Activated CD4-positive, alpha-beta T cell treated with anti-CD3 and anti-CD28 coated beads for 36 hours (primary cell): ENCODE measurements at regions of chr5 and their contacts with region 1.

Region 1: GRCh38 chr5:55969956-55970355 is 24.8 kb downstream of the IL6ST start:
- DNase-seq: no peak
- ATAC-seq: no peak
- H3K4me3 Mint-ChIP-seq: no peak overlapping the region
- H3K27ac Mint-ChIP-seq: peak overlapping the region; percentile 88
- H3K4me1 Mint-ChIP-seq: peaks cover 67% of the 10 kb centered on the region
- H3K27me3 Mint-ChIP-seq: no peaks in the 10 kb centered on the region

Region 2: DNA sequence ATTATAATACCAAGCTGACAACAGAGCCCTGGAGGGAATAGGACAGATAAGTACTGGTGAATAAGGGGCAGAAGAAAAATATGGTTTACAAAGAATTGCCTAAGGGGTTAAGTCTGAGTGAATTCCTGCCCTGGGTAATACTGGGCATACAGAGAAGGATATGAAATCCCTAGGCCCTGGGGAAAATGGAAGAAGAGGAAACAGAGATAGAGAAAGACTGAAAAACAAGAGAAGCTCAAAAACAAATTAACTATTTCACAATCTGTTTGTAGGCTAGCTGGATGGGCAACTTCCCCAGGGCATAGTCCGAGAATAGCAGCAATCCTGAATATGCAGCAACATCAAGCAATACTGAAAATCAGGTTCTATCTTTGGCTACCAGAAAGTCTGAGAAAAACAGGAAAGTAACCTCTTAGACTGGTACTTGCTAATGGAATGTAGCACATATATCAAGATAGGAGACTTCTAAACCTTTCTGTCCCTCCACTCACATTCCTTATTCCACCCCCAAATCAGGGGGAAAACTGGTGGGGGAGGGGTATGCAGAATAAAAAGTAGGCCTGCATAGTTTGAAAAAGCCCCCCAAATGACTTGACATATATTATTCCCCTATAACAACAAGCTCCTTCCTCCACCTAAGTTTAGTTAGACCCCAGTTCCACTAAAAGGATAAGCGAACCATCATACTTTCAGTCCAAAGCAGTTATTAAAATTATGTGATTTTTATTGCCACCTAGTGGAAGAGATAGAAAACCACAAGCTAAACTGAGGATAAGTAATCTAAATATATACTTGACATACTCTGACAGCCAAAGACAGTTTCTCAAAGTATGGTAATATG is 278.5 kb before region 1 on chr5:
- CTCF ChIA-PET with region 1: no interaction called
- POLR2A ChIA-PET with region 1: no interaction called
- intact Hi-C with region 1: no loop called
- DNase-seq: no peak
- ATAC-seq: peak; percentile 36
- H3K4me3 Mint-ChIP-seq: no peak overlapping the region
- H3K27ac Mint-ChIP-seq: no peak overlapping the region
- H3K4me1 Mint-ChIP-seq: no peaks in the 10 kb centered on the region
- H3K27me3 Mint-ChIP-seq: no peaks in the 10 kb centered on the region

Region 3: DNA sequence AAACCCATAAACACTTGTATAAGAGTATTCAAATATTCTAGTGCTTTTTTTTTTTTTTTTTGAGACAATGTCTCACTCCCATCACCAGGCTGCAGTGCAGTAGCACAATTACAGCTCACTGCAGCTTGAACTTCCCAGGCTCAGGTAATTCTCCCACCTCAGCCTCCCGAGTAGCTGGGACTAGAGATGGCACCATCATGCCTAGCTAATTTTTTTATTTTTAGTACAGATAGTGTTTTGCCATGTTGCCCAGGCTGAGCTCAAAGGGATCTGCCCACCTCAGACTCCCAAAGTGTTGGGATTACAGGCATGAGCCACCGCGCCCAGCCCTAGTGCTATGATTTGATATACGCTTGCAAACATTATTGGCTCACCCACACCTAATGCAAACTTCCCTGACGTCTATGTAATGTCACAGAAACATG is 13.0 kb after region 1 on chr5:
- CTCF ChIA-PET with region 1: interaction called, 5 read pairs
- POLR2A ChIA-PET with region 1: interaction called, 13 read pairs
- intact Hi-C with region 1: no loop called
- DNase-seq: peak; percentile 46
- ATAC-seq: peak; percentile 24
- H3K4me3 Mint-ChIP-seq: peak overlapping the region; percentile 37
- H3K27ac Mint-ChIP-seq: peak overlapping the region; percentile 67
- H3K4me1 Mint-ChIP-seq: peaks cover 77% of the 10 kb centered on the region
- H3K27me3 Mint-ChIP-seq: no peaks in the 10 kb centered on the region

Region 4: DNA sequence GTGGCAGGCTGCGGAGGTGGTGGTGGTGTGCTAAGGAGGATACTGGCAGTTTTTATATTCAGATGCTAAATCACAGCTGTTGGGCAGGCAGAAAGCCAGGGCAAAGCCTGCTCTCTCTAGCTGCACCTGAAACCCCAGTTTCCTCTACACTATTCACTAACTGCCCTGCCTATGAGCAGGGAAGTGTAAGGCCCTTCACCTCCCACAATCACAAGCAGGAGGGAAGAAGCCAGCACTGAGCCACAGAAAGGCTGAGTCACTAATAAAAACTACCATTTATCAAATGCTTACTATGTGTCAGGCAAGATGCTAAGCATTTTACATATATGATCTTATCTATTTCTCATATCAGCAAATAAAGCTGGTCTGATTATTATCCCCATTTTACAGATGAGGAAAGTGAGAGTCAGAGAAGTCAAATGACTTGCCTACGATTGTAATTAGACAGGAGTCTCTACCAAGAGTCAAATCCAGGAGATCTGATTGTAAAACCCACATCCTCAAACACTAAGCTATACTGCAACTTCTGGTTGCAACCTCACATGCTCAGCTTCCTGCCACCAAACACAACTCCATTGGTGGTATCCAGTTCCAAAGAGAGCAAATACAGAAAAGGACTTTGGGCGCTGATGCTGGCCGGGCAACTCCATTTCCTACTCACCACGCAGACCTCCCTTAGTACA is 42.5 kb after region 1 on chr5:
- CTCF ChIA-PET with region 1: no interaction called
- POLR2A ChIA-PET with region 1: no interaction called
- intact Hi-C with region 1: loop called in 1 of 2 experiments (anchors 1 kb)
- DNase-seq: peak; percentile 57
- ATAC-seq: peak; percentile 74
- H3K4me3 Mint-ChIP-seq: peak overlapping the region; percentile 3
- H3K27ac Mint-ChIP-seq: peak overlapping the region; percentile 61
- H3K4me1 Mint-ChIP-seq: peaks cover 48% of the 10 kb centered on the region
- H3K27me3 Mint-ChIP-seq: no peaks in the 10 kb centered on the region